ENCODE measurements at regions of chr1 and their contacts with region 1.

Region 1: DNA sequence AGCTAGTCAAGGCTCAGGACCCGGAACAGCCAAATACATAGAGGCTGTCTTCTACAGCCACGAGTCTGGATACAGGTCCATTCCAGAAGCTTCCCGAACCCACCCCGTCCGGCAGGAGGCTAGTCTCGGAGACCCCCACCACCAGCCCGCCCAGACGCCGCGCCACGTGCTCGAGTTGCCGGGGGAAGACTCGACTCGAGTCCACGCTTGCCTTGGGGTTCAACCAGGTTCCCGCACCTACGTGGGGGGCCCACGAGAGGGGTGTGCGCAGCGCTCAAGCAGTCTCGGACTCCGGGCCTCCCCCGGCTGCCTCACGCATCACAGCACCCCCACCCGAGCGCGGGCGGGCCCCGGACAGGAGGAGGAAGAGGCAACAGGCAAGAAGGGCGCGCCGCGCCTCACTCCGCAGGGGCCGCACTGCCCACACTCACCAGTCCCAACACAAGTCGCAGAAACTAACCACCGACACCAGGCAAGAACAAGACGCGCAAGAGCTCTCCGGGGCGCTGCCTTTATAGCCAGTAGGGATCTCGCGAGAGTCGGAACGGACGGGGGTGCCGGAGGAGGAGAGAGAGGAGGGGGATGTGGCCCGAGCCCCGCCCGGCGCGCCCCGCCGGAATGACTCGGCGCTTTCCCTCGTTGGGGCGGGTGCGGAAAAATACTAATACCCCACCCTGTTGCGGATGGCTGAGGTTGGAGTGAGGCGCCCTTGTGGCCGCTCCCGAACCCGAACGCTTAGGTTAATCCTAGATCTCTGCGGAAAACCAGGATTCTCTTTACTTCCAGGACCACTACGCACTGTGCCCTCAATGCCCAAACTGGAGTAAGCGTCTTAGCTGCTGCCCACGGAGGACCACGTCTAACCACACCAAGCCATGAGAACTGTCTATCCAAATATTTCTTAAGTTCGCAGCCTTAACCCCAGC is at the start of gene PRDX1:
- DNase-seq: peak; percentile 97
- ATAC-seq: peak; percentile 85
- H3K4me3 Mint-ChIP-seq: peak within 1 kb of the TSS; percentile 93
- H3K27ac Mint-ChIP-seq: peak within 1 kb of the TSS; percentile 89
- H3K4me1 Mint-ChIP-seq: peaks cover 44% of the 10 kb centered on the region
- H3K27me3 Mint-ChIP-seq: peaks cover 9% of the 10 kb centered on the region
- total RNA-seq, gene PRDX1: 225 to 412 TPM

Region 2: GRCh38 chr1:45365051-45365450 is 156.6 kb before region 1 on chr1:
- CTCF ChIA-PET with region 1: no interaction called
- DNase-seq: no peak
- ATAC-seq: no peak
- H3K4me3 Mint-ChIP-seq: no peak overlapping the region
- H3K27ac Mint-ChIP-seq: no peak overlapping the region
- H3K4me1 Mint-ChIP-seq: peaks cover 2% of the 10 kb centered on the region
- H3K27me3 Mint-ChIP-seq: no peaks in the 10 kb centered on the region

Region 3: DNA sequence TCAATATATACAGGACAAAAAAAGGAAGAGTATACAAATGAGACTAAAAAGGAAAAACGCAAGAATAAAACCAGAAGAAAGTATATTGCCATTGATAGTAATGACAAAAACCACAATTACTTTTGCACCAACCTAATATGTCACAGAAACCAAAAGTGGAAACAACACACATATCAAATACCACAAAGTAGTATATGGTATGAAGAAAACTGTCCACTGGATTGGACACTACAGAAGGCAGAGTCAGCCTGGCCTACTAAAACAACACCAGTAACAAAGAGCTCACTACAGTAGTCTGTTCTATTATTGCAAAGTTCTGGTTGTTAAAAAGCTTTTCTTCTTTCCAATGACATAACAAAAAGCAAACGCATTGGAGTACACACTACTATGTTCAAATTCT is 48.4 kb before region 1 on chr1:
- CTCF ChIA-PET with region 1: no interaction called
- DNase-seq: no peak
- ATAC-seq: no peak
- H3K4me3 Mint-ChIP-seq: no peak overlapping the region
- H3K27ac Mint-ChIP-seq: no peak overlapping the region
- H3K4me1 Mint-ChIP-seq: peaks cover 12% of the 10 kb centered on the region
- H3K27me3 Mint-ChIP-seq: no peaks in the 10 kb centered on the region

Region 4: DNA sequence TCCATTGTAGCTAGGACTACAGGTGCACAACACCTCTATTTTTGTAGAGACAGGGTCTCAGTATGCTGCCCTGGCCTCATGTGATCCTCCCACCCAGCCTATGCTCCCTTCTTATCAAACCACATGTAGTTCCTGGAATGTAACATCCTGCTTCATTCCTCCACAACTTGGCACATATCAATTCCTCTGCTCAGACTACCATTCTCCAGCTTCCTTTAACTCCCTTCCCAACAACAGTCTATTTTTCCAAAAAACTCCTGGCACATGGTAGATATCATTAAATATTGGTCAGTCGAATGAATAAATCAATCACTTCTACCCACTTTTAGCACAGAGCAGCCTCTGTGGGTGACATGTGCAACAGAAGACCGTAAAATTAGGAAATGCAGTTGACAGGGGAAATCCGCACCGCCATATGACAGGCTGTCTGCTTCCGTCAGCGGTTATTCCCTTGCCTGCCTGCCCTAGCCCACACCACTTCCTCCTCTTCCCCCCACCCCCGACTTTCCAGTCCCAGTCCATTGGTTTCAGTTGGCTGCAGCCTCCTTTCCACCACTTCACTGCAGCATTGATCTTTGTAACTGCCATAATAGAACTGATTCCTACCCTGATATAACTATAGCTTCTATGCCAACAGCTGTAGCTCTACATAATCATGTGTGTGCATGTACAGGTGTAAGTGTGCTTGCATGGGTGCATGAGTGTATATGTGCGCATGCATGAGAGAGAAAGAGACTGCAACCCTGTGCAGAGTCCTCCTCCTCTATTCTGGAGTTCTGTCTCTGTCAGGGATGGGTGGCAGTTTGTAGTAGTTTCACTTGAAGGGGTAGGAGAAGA is 22.1 kb after region 1 on chr1:
- CTCF ChIA-PET with region 1: interaction called, 17 read pairs
- DNase-seq: peak; percentile 83
- ATAC-seq: peak; percentile 86
- H3K4me3 Mint-ChIP-seq: peak overlapping the region; percentile 11
- H3K27ac Mint-ChIP-seq: peak overlapping the region; percentile 3
- H3K4me1 Mint-ChIP-seq: peaks cover 29% of the 10 kb centered on the region
- H3K27me3 Mint-ChIP-seq: peaks cover 37% of the 10 kb centered on the region

Region 5: DNA sequence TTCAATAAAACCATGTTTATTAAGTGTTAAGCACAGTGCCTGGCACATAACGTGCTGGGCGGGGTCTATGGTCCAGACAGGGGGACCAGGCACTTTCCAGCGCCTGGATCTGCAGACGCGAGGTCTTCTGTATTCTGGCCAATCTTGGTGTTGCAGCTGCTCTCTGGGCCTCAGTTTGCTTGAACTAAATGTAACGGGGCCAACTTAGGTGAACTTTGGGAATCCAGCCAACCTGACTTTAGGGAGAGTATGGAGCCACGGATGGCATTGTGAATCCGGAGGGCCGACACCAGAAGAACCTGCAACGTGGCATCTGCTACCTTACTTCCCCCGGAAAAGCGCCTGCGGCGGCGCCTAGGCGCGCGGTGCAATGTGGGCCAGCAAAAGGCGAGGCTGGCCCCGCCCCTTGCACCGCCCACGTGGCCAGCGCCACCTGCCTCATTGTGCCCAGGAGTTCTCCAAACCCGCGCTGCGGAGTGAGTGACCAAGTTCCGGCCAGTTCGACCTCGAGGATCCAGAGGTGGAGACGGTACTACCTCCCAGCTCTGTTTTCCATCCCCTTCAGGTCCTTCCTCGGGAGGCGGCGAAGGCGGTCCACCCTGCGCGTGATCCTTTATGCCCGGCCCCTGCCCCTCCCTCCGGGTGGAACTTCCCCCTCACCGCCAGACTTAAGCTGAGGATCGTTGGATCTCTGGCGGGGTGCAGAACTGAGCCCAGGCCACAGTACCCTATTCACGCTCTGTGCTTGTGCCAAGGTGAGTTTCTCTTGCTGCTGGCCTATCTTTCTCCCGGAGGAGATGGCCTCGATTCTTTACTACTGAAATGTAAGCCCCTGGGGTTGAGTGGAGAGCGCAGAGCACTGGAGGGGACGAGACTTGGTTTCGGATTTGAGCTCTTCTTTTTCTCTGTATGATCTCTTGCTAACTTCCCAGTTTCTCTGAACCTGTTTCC is 29.0 kb after region 1 on chr1 and contains the start of gene AKR1A1:
- CTCF ChIA-PET with region 1: interaction called, 17 read pairs
- DNase-seq: peak; percentile 92
- ATAC-seq: peak; percentile 96
- H3K4me3 Mint-ChIP-seq: peak within 1 kb of the TSS; percentile 92
- H3K27ac Mint-ChIP-seq: peak within 1 kb of the TSS; percentile 88
- H3K4me1 Mint-ChIP-seq: peaks cover 22% of the 10 kb centered on the region
- H3K27me3 Mint-ChIP-seq: peaks cover 12% of the 10 kb centered on the region
- total RNA-seq, gene AKR1A1: 137 to 150 TPM

Region 6: GRCh38 chr1:45557422-45557944 is 35.8 kb after region 1 on chr1:
- CTCF ChIA-PET with region 1: interaction called, 10 read pairs
- DNase-seq: no peak
- ATAC-seq: no peak
- H3K4me3 Mint-ChIP-seq: no peak overlapping the region
- H3K27ac Mint-ChIP-seq: peak overlapping the region; percentile 17
- H3K4me1 Mint-ChIP-seq: peaks cover 16% of the 10 kb centered on the region
- H3K27me3 Mint-ChIP-seq: no peaks in the 10 kb centered on the region

Region 7: DNA sequence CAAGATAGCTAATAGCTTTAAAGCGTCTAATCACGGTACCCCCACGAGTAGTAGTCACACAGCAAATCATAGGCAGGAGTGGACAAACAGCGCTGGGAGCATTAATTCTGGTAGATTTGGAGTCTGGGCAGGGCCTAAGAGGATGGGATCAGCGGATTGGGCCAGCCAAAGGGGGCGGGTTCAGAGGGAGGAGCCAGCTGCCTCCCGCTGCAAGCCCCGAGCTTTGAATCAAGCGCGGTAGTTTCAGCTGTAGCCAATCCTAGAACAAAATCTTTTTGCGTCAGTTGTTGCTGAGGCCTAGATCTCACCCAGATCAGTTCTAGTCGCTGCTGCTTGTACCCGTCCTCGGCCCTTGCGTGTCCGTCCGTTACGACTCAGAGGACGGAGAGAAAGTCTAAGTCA is 61.6 kb after region 1 on chr1:
- CTCF ChIA-PET with region 1: interaction called, 11 read pairs
- DNase-seq: peak; percentile 97
- ATAC-seq: peak; percentile 76
- H3K4me3 Mint-ChIP-seq: peak overlapping the region; percentile 87
- H3K27ac Mint-ChIP-seq: peak overlapping the region; percentile 100
- H3K4me1 Mint-ChIP-seq: peaks cover 26% of the 10 kb centered on the region
- H3K27me3 Mint-ChIP-seq: no peaks in the 10 kb centered on the region

Region 8: GRCh38 chr1:45730475-45731339 is 209.0 kb after region 1 on chr1:
- CTCF ChIA-PET with region 1: no interaction called
- DNase-seq: no peak
- ATAC-seq: no peak
- H3K4me3 Mint-ChIP-seq: no peak overlapping the region
- H3K27ac Mint-ChIP-seq: no peak overlapping the region
- H3K4me1 Mint-ChIP-seq: peaks cover 2% of the 10 kb centered on the region
- H3K27me3 Mint-ChIP-seq: no peaks in the 10 kb centered on the region

Region 9: GRCh38 chr1:46017870-46018503 is 496.3 kb after region 1 on chr1:
- CTCF ChIA-PET with region 1: no interaction called
- DNase-seq: no peak
- ATAC-seq: no peak
- H3K4me3 Mint-ChIP-seq: no peak overlapping the region
- H3K27ac Mint-ChIP-seq: no peak overlapping the region
- H3K4me1 Mint-ChIP-seq: no peaks in the 10 kb centered on the region
- H3K27me3 Mint-ChIP-seq: no peaks in the 10 kb centered on the region